Mammary epithelial cell (primary cell): ENCODE measurements at regions of chr1 and their contacts with region 1.

Region 1: DNA sequence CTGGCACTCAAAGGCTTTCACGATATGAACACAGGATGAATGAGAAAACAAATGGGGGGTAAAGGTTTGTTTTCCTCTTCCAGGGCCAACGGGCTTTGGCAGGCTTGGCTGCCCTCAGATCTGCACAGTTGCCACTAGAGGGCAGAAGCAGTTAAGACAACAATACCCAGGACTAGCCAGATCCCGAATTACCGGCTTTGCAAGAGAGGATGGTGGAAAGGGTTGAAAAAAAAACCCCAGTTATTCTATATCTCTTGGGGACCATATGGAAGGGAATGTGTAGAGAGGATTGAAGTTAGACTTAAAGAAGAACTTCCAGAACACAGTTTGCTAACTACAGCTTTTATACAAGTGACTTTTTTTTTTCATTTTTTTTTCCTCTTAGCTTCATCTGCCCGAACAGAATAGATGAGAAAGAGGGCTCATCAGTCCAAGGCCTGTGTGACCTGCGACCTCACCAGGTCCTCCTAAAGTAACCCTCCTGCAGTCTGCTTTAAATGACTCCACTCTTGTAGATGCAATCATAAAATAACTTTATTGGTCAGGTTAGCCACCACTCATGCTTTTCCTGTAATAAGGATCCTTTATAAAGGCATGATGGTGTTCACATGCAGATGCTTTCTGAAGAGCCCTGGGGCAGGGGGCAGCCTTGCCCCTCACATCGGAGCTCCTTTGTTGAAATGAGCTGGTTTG is 10.7 kb downstream of the FMOD start:
- DNase-seq: peak; percentile 63
- H3K4me3 ChIP-seq: no peak overlapping the region
- H3K27ac ChIP-seq: no peak overlapping the region
- H3K4me1 ChIP-seq: peaks cover 25% of the 10 kb centered on the region
- H3K27me3 ChIP-seq: no peaks in the 10 kb centered on the region
- CTCF ChIP-seq: peak; percentile 86 to 94

Region 2: GRCh38 chr1:203038891-203039608 is 301.2 kb before region 1 on chr1:
- CTCF ChIA-PET with region 1: no interaction called
- dilution Hi-C with region 1: no loop called
- in situ Hi-C with region 1: no loop called
- intact Hi-C with region 1: loop called (anchors 2 kb)
- DNase-seq: peak; percentile 61
- H3K4me3 ChIP-seq: no peak overlapping the region
- H3K27ac ChIP-seq: no peak overlapping the region
- H3K4me1 ChIP-seq: peaks cover 25% of the 10 kb centered on the region
- H3K27me3 ChIP-seq: no peaks in the 10 kb centered on the region
- CTCF ChIP-seq: peak; percentile 92 to 96

Region 3: DNA sequence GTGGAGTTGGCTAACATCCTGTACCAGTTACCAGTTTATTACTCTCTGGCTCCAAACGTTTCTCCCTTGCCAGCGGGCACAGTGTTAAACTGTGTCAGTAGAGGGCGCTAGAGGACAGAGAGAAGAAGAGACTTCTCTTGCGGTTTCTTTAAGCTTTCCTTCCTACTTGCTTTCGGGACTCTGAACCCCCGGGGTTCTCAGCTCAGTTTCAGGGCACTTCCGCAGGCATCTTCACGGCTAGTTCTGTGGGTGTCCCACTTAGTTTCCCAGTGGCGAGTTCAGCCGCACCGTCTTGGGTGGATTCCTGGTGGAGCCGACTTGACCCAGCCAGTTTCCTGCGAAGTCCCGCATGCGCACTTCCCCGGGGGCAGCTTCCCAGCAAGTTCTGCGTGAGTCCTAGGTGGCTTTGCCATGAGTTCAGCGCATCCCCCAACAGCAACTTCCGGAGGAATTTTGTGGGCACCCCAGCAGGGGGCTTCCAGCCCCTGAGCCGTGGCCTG is 72.9 kb before region 1 on chr1:
- CTCF ChIA-PET with region 1: interaction called, 5 read pairs
- dilution Hi-C with region 1: loop called (anchors 5 kb)
- in situ Hi-C with region 1: loop called (anchors 5 kb)
- intact Hi-C with region 1: no loop called
- DNase-seq: peak; percentile 78
- H3K4me3 ChIP-seq: peak overlapping the region; percentile 12 to 52 (median 52)
- H3K27ac ChIP-seq: peak overlapping the region; percentile 1
- H3K4me1 ChIP-seq: peaks cover 2% of the 10 kb centered on the region
- H3K27me3 ChIP-seq: no peaks in the 10 kb centered on the region
- CTCF ChIP-seq: peak; percentile 92 to 94

Region 4: DNA sequence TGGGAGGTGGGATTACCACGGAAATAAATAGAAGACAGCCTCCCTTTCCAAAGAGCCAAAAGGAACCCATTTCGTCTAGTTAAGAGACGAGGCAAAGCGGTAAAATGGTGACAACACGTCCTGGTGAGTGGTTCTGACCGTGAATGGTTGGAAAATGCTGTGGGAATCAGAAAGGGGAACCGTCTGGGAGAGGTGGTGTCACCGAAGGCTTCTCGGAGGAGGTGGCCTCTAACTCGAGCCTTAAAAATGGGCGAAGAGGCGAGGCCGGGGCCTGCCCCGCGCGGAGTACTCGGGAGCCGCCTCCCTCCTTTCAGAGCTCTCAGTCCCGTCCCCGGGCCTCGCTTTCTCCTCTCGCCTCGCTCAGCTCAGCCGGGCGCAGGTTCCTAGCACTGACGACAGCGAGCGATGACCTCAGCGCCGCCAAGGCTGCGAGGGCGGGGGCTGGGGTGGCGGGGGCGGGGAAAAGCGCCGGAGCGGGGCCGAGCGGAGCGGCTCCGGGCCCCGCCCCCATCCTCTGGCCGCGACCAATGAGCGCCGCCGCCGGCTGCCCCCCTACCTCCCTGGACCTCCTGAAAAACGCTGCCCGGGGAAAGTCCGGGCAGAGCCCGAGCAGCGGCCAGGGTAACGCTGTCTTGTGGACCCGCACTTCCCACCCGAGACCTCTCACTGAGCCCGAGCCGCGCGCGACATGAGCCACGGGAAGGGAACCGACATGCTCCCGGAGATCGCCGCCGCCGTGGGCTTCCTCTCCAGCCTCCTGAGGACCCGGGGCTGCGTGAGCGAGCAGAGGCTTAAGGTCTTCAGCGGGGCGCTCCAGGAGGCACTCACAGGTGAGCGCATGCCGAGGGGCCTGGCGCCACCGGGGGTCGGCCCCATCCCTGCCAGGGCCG is 35.1 kb before region 1 on chr1 and contains the start of gene BTG2:
- CTCF ChIA-PET with region 1: no interaction called
- dilution Hi-C with region 1: no loop called
- in situ Hi-C with region 1: no loop called
- intact Hi-C with region 1: loop called (anchors 1 kb)
- DNase-seq: peak; percentile 91
- H3K4me3 ChIP-seq: peak within 1 kb of the TSS; percentile 86 to 94 (median 93)
- H3K27ac ChIP-seq: peak within 1 kb of the TSS; percentile 82
- H3K4me1 ChIP-seq: peaks cover 44% of the 10 kb centered on the region
- H3K27me3 ChIP-seq: no peaks in the 10 kb centered on the region
- CTCF ChIP-seq: no peak
- total RNA-seq, gene BTG2: 74.8 to 107 TPM

Region 5: GRCh38 chr1:203428981-203429599 is 88.8 kb after region 1 on chr1:
- CTCF ChIA-PET with region 1: no interaction called
- dilution Hi-C with region 1: loop called (anchors 5 kb)
- in situ Hi-C with region 1: no loop called
- intact Hi-C with region 1: no loop called
- DNase-seq: peak; percentile 37
- H3K4me3 ChIP-seq: no peak overlapping the region
- H3K27ac ChIP-seq: no peak overlapping the region
- H3K4me1 ChIP-seq: no peaks in the 10 kb centered on the region
- H3K27me3 ChIP-seq: peaks cover 3% of the 10 kb centered on the region
- CTCF ChIP-seq: no peak

Region 6: DNA sequence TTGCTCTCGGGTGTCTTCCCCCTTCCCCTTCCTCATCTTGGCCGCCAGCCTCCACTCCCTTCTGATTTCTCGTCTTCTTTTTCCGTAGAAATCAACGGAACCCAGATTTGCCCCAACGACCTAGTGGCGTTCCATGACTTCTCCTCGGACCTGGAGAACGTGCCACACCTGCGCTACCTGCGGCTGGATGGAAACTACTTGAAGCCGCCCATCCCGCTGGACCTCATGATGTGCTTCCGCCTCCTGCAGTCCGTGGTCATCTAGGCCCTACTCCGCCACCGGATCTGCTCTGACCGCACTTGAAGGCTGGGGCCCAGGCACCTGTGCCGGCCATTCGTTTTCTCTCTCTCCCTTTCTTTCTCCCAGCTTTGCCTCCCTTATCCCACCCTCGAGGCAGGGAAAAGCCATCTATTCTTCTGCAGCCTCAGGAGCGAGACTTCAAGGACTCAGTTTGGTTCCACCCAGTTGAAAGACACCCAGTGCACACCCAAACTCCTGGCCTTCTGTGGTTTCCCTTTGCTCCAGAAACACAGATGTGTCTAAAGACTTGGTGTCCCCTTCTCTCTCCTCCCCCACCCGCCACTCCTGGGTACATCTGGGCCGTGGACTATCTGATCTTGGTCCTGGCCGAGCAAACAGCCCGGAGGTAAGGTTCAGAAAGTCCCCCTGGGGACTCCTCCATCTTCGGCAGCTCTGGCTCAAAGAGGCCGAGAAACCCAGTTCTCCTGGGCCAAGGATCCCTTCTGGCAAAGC is 146.5 kb after region 1 on chr1:
- CTCF ChIA-PET with region 1: interaction called, 3 read pairs
- dilution Hi-C with region 1: no loop called
- in situ Hi-C with region 1: loop called in 1 of 2 experiments (anchors 5 kb)
- intact Hi-C with region 1: loop called (anchors 1 kb)
- DNase-seq: no peak
- H3K4me3 ChIP-seq: no peak overlapping the region
- H3K27ac ChIP-seq: no peak overlapping the region
- H3K4me1 ChIP-seq: peaks cover 5% of the 10 kb centered on the region
- H3K27me3 ChIP-seq: no peaks in the 10 kb centered on the region
- CTCF ChIP-seq: no peak

Region 7: GRCh38 chr1:203861379-203862184 is 521.3 kb after region 1 on chr1 and contains the start of gene SNRPE:
- CTCF ChIA-PET with region 1: no interaction called
- dilution Hi-C with region 1: no loop called
- in situ Hi-C with region 1: no loop called
- intact Hi-C with region 1: loop called (anchors 5 kb)
- DNase-seq: peak; percentile 97
- H3K4me3 ChIP-seq: peak within 1 kb of the TSS; percentile 59 to 92 (median 74)
- H3K27ac ChIP-seq: peak within 1 kb of the TSS; percentile 82
- H3K4me1 ChIP-seq: peaks cover 22% of the 10 kb centered on the region
- H3K27me3 ChIP-seq: no peaks in the 10 kb centered on the region
- CTCF ChIP-seq: peak; percentile 80 to 94
- total RNA-seq, gene SNRPE: 21.7 to 131 TPM